K562 (cell line): ENCODE measurements at regions of chr3 and their contacts with region 1.

Region 1: GRCh38 chr3:125644036-125645010 is 49.0 kb upstream of the OSBPL11 start:
- DNase-seq: no peak
- ATAC-seq: no peak
- H3K4me3 ChIP-seq: no peak overlapping the region
- H3K27ac ChIP-seq: no peak overlapping the region
- H3K4me1 ChIP-seq: no peaks in the 10 kb centered on the region
- H3K27me3 ChIP-seq: peaks cover 0 to 4% of the 10 kb centered on the region in 2 experiments; a peak in 1 of 5 replicates
- CTCF ChIP-seq: no peak
- EP300 ChIP-seq: no peak
- POLR2A ChIP-seq: no peak
- RAD21 ChIP-seq: no peak

Region 2: GRCh38 chr3:127141921-127142730 is 1497.8 kb after region 1 on chr3:
- CTCF ChIA-PET with region 1: no interaction called
- POLR2A ChIA-PET with region 1: no interaction called
- in situ Hi-C with region 1: loop called (anchors 10 kb)
- intact Hi-C with region 1: no loop called
- DNase-seq: no peak
- ATAC-seq: no peak
- H3K4me3 ChIP-seq: no peak overlapping the region
- H3K27ac ChIP-seq: no peak overlapping the region
- H3K4me1 ChIP-seq: no peaks in the 10 kb centered on the region; a peak in 1 of 5 replicates
- H3K27me3 ChIP-seq: no peaks in the 10 kb centered on the region; a peak in 1 of 5 replicates
- CTCF ChIP-seq: no peak
- EP300 ChIP-seq: no peak
- POLR2A ChIP-seq: no peak
- RAD21 ChIP-seq: no peak